ENCODE measurements at regions of chr5 and their contacts with region 1.

Region 1: GRCh38 chr5:134140530-134141201 is 26.2 kb downstream of the TCF7 start:
- DNase-seq: no peak
- H3K4me3 ChIP-seq: no peak overlapping the region
- H3K27me3 ChIP-seq: no peaks in the 10 kb centered on the region
- CTCF ChIP-seq: peak; percentile 88

Region 2: DNA sequence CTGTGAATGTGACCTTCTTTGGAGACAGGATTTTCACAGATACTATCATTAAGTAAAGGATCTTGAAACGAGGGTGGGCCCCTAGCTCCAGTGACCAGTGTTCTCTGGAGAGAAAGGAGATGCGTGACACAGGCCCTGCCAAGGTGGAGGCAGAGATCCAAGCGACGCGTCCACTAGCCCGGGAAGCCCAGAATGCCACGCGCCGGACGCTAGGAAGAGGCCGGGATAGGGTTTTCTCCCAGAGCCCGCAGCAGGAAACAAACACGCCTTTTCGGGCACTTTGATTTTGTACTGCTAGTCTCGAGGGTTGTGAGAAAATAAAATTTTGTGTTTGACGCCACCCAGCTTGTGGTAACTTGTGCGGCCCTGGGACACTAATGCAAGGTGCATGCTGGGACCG is 106.3 kb before region 1 on chr5:
- CTCF ChIA-PET with region 1: interaction called, 381 read pairs
- POLR2A ChIA-PET with region 1: no interaction called
- DNase-seq: no peak
- H3K4me3 ChIP-seq: no peak overlapping the region
- H3K27me3 ChIP-seq: peaks cover 11% of the 10 kb centered on the region
- CTCF ChIP-seq: no peak

Region 3: GRCh38 chr5:134113902-134114875 is 26.5 kb before region 1 on chr5 and contains the start of gene TCF7:
- CTCF ChIA-PET with region 1: interaction called, 21 read pairs
- POLR2A ChIA-PET with region 1: no interaction called
- DNase-seq: no peak
- H3K4me3 ChIP-seq: peak within 1 kb of the TSS; percentile 43
- H3K27me3 ChIP-seq: peaks cover 4% of the 10 kb centered on the region
- CTCF ChIP-seq: no peak
- polyA plus RNA-seq, gene TCF7: 0.78 and 0.86 TPM in 2 replicates

Region 4: GRCh38 chr5:134119720-134120119 is 20.9 kb before region 1 on chr5:
- CTCF ChIA-PET with region 1: interaction called, 105 read pairs
- POLR2A ChIA-PET with region 1: no interaction called
- DNase-seq: no peak
- H3K4me3 ChIP-seq: no peak overlapping the region
- H3K27me3 ChIP-seq: no peaks in the 10 kb centered on the region
- CTCF ChIP-seq: no peak

Region 5: DNA sequence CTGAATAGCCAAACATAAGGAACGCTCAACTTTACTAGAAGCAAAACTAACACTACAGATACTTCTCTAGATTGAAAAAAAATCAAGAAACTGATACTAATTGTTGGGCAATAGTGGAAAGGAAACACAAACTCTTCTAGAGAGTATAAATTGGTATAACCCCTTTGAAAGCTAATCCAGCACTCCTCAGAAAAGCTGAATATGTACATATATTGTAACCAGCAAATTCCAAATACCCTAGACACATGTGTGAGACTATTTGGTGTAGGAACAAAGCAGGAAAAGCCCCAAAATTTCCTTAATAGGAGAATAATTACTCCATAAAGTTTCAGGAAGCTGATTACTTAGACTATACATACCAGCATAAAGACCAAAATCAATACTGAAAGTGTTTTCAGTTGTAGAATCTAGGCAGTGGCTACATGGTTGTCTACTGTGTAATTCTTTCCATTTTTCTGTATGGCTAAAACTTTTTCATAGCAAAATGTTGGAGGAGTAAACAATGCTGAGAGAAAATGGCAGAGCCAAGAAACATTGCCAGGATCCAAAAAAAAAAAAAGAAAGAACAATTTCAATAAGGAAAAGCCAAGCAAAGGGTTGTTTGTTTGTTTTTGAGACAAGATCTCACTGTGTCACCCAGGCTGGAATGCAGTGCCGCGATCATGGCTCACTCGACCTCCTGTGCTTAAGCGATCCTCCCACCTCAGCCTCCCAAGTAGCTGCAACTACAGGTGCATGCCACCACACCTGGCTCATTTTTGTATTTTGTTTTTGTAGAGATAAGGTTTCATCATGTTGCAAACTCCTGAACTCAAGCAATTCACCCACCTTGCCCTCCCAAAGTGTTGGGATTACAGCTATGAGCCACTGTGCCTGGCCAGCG is 21.1 kb after region 1 on chr5:
- CTCF ChIA-PET with region 1: interaction called, 18 read pairs
- POLR2A ChIA-PET with region 1: no interaction called
- DNase-seq: no peak
- H3K4me3 ChIP-seq: no peak overlapping the region
- H3K27me3 ChIP-seq: no peaks in the 10 kb centered on the region
- CTCF ChIP-seq: no peak

Measured in BJ (cell line).